ENCODE measurements at regions of chr3 and their contacts with region 1.

Region 1: DNA sequence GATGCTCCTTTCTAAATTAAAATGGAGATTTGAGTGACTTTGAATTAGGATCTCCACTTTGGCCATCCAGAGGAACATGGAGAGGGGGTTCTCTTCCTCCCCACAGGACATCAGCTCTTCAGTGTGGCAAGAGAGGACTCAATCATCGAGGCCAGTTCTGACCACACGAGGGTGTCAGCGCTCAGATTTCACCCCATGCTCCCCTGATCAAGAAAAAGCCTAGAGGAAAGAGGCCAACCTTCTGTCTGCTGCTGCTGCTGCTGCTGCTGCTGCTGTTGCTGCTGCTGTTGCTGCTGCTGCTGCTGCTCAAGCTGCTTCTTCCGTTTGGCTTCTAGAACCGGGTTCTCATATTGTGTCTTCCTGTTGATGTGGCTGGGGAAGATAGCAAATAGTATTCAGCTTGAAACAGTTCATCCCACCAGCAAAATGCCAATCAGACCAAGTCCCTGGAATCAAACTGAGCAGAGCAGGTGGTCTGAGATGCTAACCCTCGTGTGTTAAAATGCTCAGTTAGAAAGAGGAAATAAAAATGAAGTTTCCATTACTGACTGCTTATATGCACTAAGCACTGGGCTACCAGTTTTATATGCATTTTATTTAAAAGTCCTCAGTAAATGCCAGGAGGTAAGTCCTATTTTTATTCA is 599.0 kb downstream of the MAGI1 start:
- DNase-seq: peak; percentile 54 to 59
- H3K4me3 ChIP-seq: no peak overlapping the region
- H3K27ac ChIP-seq: no peak overlapping the region
- H3K4me1 ChIP-seq: no peaks in the 10 kb centered on the region
- H3K27me3 ChIP-seq: no peaks in the 10 kb centered on the region
- CTCF ChIP-seq: peak in 5 of 6 experiments; percentile 42 to 63 (median 56)
- POLR2A ChIP-seq: no peak

Region 2: GRCh38 chr3:65729555-65729954 is 289.8 kb after region 1 on chr3:
- intact Hi-C with region 1: loop called (anchors 10 kb)
- DNase-seq: peak in 1 of 2 donors; percentile 14
- H3K4me3 ChIP-seq: no peak overlapping the region
- H3K27ac ChIP-seq: peak overlapping the region in 2 of 3 donors; percentile 27 to 41
- H3K4me1 ChIP-seq: peaks cover 0 to 13% of the 10 kb centered on the region in 2 donors
- H3K27me3 ChIP-seq: no peaks in the 10 kb centered on the region
- CTCF ChIP-seq: no peak
- POLR2A ChIP-seq: no peak